Activated CD4-positive, alpha-beta T cell treated with anti-CD3 and anti-CD28 coated beads for 36 hours (primary cell): ENCODE measurements at regions of chr9 and their contacts with region 1.

Region 1: DNA sequence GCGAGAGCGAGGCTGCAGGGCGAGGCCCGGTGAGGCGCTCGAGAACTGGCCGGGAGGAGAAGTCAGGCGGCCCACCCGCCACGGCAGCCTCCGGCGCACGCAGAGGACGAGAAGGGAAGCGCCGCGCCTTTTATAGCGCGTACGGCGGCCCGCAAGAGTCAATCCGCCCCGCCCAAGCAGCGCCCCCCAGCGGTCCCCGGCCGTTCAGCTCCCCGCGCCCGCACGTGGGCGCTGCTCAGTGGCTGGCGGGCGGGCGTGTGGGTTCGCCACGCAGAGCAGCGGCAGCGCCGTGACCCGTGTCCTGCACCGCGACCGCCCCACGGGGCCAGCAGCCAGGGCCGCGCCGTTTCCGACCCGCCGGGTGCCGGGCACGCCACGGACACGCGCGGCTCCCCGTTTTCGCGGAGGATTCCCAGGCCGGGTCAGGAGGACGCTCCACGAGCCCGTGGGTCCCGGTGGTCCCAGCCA is 14.6 kb downstream of the LCN10 start:
- DNase-seq: peak; percentile 95
- ATAC-seq: peak; percentile 72
- H3K4me3 Mint-ChIP-seq: peak overlapping the region; percentile 100
- H3K27ac Mint-ChIP-seq: no peak overlapping the region
- H3K4me1 Mint-ChIP-seq: peaks cover 39% of the 10 kb centered on the region
- H3K27me3 Mint-ChIP-seq: no peaks in the 10 kb centered on the region

Region 2: DNA sequence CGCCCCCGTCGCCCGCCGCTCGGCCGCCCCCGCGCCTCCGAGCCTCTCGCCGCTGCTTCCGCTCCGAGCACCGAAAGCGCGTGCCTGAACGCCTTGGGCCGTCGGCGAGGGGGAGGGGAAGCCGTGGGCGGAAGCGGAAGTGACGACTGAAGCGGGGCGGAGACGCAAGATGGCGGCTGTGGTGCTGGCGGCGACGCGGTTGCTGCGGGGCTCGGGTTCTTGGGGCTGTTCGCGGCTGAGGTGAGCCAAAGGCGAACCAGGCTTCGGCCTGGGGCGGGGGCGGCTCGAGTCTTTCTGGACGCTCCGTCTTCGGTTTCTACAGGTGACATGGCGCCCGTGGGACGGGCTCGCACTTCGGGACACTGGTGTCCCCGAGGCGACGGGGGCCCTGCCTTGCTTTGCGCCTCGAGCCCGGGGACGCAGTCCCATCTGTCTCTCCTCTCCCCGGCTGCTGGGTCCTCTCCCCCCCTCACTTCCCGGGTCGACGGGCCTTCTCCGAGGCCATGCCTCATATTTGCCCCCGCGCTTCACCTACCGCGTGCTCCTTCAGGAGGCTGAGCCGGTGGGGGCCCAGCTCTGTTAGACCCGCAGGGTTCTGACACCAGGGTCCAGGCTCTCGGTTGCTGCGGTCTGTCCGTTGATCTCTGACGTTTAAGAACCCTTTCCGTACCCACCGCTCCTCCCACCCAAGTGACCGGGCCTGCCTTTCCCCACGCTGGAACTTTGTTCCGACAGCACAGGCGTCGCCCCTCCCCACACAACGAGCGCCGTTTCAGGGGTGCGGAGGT is 317.4 kb before region 1 on chr9 and contains the starts of genes ENTR1 and PMPCA:
- CTCF ChIA-PET with region 1: no interaction called
- POLR2A ChIA-PET with region 1: no interaction called
- intact Hi-C with region 1: loop called in 1 of 2 experiments (anchors 2 kb)
- DNase-seq: peak; percentile 98
- ATAC-seq: peak; percentile 75
- H3K4me3 Mint-ChIP-seq: peak within 1 kb of the TSS; percentile 90
- H3K27ac Mint-ChIP-seq: peak within 1 kb of the TSS; percentile 94
- H3K4me1 Mint-ChIP-seq: peaks cover 49% of the 10 kb centered on the region
- H3K27me3 Mint-ChIP-seq: no peaks in the 10 kb centered on the region
- total RNA-seq, gene ENTR1: 57.2 to 67.7 TPM
- total RNA-seq, gene PMPCA: 88.0 to 113 TPM

Region 3: DNA sequence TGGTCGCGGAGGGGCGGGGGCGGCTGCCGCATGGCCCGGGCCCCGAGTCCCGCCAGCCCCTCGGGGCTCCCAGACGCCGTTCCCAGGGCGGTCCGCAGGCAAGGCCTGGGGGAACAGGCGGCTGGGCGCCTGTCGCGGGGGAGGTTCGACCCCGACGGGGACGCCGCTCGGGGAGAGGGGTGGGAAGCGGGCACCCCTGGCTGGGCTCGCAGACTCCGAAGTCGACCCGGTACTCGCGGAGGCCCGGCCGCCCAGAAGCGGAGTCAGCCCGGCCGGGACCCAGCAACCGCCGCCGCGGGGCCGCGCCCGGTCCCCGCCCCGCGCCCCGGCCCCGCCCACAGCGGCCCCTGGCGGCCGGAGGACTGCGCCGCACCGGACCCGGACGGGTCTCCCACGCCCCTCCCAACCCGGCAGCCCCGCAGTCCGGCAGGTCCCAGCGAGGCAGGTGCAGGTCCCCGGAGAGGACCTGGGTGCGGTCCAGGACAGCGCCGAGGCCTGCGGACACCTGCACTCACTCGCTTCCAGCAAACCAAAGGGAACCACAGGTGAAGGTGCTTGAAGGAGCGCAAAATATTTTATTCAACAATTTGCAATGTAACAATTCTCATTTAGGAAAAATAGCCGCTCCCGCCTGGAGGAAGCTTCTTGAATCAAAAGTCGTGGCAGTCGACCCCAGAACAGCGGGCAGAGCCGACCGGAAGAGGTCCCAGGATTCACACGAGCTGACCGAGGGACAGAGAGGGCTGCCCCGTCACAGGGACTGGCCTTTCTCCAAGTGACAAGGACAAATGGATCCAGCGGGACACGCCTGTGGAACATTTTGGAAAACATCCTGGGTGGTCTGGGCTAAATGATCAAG is 288.3 kb before region 1 on chr9 and contains the start of gene INPP5E:
- CTCF ChIA-PET with region 1: no interaction called
- POLR2A ChIA-PET with region 1: no interaction called
- intact Hi-C with region 1: loop called in 1 of 2 experiments (anchors 1 kb)
- DNase-seq: peak; percentile 89
- ATAC-seq: peak; percentile 85
- H3K4me3 Mint-ChIP-seq: peak within 1 kb of the TSS; percentile 80
- H3K27ac Mint-ChIP-seq: no peak within 1 kb of the TSS
- H3K4me1 Mint-ChIP-seq: peaks cover 21% of the 10 kb centered on the region
- H3K27me3 Mint-ChIP-seq: no peaks in the 10 kb centered on the region
- total RNA-seq, gene INPP5E: 13.5 to 14.1 TPM

Region 4: GRCh38 chr9:136665111-136665703 is 62.9 kb before region 1 on chr9:
- CTCF ChIA-PET with region 1: interaction called, 4 read pairs
- POLR2A ChIA-PET with region 1: no interaction called
- intact Hi-C with region 1: loop called in 1 of 2 experiments (anchors 5 kb)
- DNase-seq: peak; percentile 58
- ATAC-seq: peak; percentile 50
- H3K4me3 Mint-ChIP-seq: peak overlapping the region; percentile 62
- H3K27ac Mint-ChIP-seq: no peak overlapping the region
- H3K4me1 Mint-ChIP-seq: peaks cover 5% of the 10 kb centered on the region
- H3K27me3 Mint-ChIP-seq: peaks cover 9% of the 10 kb centered on the region

Region 5: GRCh38 chr9:136686794-136687711 is 41.1 kb before region 1 on chr9 and contains the start of gene AGPAT2:
- CTCF ChIA-PET with region 1: no interaction called
- POLR2A ChIA-PET with region 1: no interaction called
- intact Hi-C with region 1: loop called in 1 of 2 experiments (anchors 1 kb)
- DNase-seq: peak; percentile 84
- ATAC-seq: peak; percentile 91
- H3K4me3 Mint-ChIP-seq: peak within 1 kb of the TSS; percentile 70
- H3K27ac Mint-ChIP-seq: no peak within 1 kb of the TSS
- H3K4me1 Mint-ChIP-seq: no peaks in the 10 kb centered on the region
- H3K27me3 Mint-ChIP-seq: peaks cover 2% of the 10 kb centered on the region
- total RNA-seq, gene AGPAT2: 9.0 to 10.4 TPM

Region 6: DNA sequence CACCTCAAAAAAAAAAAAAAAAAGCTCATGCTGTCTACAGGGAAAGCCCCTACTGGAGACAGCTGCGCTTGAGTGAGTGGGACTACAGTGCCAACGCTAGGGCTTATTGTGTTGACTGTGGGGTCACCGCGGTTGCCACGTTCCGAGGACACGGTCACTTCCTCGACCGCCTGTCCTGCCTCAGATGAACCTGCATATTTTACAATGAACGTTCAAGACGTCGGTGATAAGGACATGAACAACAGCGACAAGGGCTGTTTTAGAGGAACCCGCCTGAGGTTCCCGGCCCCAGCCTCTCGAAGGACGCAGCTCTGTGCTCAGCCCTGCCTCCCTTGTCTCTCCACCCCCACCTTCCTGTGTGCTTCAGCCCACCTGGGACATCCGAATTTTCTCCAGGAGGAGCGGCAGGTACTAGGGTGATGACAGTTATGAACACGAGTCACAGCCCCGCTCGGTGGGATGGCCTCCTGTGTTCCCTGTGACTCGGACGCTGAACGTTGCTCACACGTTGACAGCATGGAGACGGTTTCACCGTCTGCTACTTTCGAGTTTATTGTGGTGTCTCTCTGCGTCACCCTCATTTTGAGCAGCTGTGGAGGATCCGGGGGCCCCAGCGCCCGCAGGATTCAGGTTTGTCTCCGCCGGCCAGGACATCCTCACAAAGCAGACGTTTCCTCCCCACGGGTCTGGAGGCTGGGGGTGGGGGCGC is 27.0 kb before region 1 on chr9:
- CTCF ChIA-PET with region 1: interaction called, 5 read pairs
- POLR2A ChIA-PET with region 1: interaction called, 7 read pairs
- intact Hi-C with region 1: loop called (anchors 1 to 2 kb)
- DNase-seq: peak; percentile 92
- ATAC-seq: peak; percentile 97
- H3K4me3 Mint-ChIP-seq: peak overlapping the region; percentile 62
- H3K27ac Mint-ChIP-seq: peak overlapping the region; percentile 91
- H3K4me1 Mint-ChIP-seq: peaks cover 20% of the 10 kb centered on the region
- H3K27me3 Mint-ChIP-seq: peaks cover 20% of the 10 kb centered on the region